ENCODE measurements at regions of chr19 and their contacts with region 1.

Region 1: DNA sequence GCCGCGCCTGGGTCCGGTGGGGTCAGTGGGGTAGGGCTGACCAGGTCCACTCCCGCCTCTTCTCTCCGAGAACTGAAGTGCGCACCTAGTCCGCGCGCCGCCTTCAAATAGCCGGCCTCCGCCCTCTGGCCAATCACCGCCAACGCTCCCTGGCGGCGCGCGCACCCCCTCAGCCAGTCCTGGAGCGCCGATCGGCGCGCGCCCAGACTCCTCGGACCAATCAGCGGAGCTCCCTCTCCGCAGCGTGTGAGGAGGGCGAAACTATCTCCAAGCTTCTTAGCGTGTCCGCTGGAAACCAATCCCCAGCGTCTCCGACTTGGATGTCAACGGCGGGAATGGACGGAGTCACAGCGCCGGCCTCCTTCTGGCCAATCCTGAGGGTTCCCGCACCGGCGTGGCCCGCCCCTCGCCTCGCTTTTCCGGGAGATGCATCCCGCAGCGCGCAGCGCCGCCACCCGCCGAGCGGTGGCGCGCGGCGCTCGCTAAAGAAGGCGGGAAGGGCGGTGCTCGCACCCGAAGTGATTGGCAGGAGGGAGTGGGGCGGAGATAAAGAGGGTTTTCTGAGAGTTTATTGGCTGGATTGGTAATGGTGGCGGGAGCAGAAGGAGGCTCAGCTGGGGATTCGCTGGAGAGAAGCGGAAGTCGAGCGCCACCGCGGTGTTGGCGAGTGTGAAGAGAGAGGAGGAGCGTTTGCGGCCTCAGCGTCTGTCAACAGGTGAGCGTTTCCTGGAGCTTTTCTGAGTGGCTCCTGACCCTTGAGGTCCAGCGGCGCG is at the start of gene ASF1B:
- DNase-seq: peak; percentile 94 to 99 (median 99)
- ATAC-seq: peak; percentile 88
- H3K4me3 ChIP-seq: peak within 1 kb of the TSS; percentile 87
- H3K4me3 Mint-ChIP-seq: peak within 1 kb of the TSS; percentile 84 to 97 (median 88)
- H3K27ac ChIP-seq: peak within 1 kb of the TSS; percentile 90
- H3K27ac Mint-ChIP-seq: peak within 1 kb of the TSS; percentile 88 to 97 (median 93)
- H3K4me1 ChIP-seq: peaks cover 8 to 15% of the 10 kb centered on the region in 2 donors
- H3K4me1 Mint-ChIP-seq: peaks cover 0 to 43% (median 34%) of the 10 kb centered on the region in 7 donors
- H3K27me3 ChIP-seq: no peaks in the 10 kb centered on the region
- H3K27me3 Mint-ChIP-seq: no peaks in the 10 kb centered on the region
- total RNA-seq, gene ASF1B: 0.98 to 79.0 (median 2.1) TPM

Region 2: DNA sequence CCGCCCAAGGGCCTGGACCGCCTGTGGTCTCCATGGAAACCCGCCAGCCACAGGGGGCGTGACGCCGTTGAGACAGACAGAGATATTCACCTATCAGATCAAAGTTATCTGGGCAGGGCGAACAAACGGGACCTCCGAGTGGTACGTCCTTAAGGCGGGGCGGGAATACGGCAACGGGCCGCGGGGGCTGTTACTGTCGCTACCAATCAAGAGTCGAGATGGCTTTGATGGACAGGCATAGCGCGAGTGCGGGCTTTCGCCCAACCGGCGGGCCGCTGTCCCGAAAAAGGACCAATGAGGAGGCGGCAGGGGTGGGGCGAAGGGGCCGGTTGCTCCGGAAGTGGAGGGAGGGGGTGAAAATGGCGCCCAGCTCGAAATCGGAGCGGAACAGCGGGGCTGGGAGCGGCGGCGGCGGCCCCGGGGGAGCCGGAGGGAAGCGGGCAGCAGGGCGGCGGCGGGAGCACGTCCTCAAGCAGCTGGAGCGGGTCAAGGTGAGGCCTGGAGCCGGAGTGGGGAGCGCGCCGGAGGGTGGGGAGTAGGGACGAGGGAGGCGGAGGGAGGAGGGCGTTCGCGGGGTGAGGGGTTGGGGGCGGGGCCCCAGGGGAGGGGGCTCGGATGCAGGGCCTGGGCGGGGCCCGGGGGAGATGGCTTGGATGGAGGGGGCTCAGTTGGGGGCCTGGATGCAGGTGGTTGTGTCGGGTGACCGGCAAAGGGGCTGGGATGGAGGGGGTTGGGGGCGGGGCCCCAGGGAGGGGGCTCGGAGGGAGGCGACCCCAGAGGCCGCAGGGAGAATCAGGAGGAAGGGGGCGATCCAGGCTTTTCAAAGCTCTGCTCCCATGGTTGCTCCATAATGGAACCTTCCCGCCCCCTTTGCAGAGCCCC is 184.3 kb before region 1 on chr19 and contains the start of gene DCAF15:
- CTCF ChIA-PET with region 1: no interaction called
- POLR2A ChIA-PET with region 1: no interaction called
- intact Hi-C with region 1: loop called in 1 of 2 experiments (anchors 1 kb)
- DNase-seq: peak; percentile 89 to 99 (median 99)
- ATAC-seq: peak; percentile 98
- H3K4me3 ChIP-seq: peak within 1 kb of the TSS; percentile 75
- H3K4me3 Mint-ChIP-seq: peak within 1 kb of the TSS; percentile 74 to 99 (median 93)
- H3K27ac ChIP-seq: peak within 1 kb of the TSS; percentile 90
- H3K27ac Mint-ChIP-seq: peak within 1 kb of the TSS; percentile 86 to 99 (median 91)
- H3K4me1 ChIP-seq: peaks cover 13 to 17% of the 10 kb centered on the region in 2 donors
- H3K4me1 Mint-ChIP-seq: peaks cover 5 to 24% (median 19%) of the 10 kb centered on the region in 7 donors
- H3K27me3 ChIP-seq: no peaks in the 10 kb centered on the region
- H3K27me3 Mint-ChIP-seq: no peaks in the 10 kb centered on the region
- total RNA-seq, gene DCAF15: 68.5 to 92.0 (median 87.2) TPM

Region 3: GRCh38 chr19:14091081-14091812 is 45.4 kb before region 1 on chr19:
- CTCF ChIA-PET with region 1: interaction called, 7 read pairs
- POLR2A ChIA-PET with region 1: interaction called, 9 read pairs
- intact Hi-C with region 1: loop called (anchors 1 kb)
- DNase-seq: peak; percentile 56 to 89 (median 84)
- ATAC-seq: peak; percentile 71
- H3K4me3 ChIP-seq: peak overlapping the region; percentile 99
- H3K4me3 Mint-ChIP-seq: peak overlapping the region; percentile 81 to 100 (median 98)
- H3K27ac ChIP-seq: peak overlapping the region; percentile 89
- H3K27ac Mint-ChIP-seq: peak overlapping the region; percentile 89 to 100 (median 98)
- H3K4me1 ChIP-seq: peaks cover 8 to 10% of the 10 kb centered on the region in 2 donors
- H3K4me1 Mint-ChIP-seq: peaks cover 13 to 21% (median 18%) of the 10 kb centered on the region in 7 donors
- H3K27me3 ChIP-seq: no peaks in the 10 kb centered on the region
- H3K27me3 Mint-ChIP-seq: no peaks in the 10 kb centered on the region

Region 4: DNA sequence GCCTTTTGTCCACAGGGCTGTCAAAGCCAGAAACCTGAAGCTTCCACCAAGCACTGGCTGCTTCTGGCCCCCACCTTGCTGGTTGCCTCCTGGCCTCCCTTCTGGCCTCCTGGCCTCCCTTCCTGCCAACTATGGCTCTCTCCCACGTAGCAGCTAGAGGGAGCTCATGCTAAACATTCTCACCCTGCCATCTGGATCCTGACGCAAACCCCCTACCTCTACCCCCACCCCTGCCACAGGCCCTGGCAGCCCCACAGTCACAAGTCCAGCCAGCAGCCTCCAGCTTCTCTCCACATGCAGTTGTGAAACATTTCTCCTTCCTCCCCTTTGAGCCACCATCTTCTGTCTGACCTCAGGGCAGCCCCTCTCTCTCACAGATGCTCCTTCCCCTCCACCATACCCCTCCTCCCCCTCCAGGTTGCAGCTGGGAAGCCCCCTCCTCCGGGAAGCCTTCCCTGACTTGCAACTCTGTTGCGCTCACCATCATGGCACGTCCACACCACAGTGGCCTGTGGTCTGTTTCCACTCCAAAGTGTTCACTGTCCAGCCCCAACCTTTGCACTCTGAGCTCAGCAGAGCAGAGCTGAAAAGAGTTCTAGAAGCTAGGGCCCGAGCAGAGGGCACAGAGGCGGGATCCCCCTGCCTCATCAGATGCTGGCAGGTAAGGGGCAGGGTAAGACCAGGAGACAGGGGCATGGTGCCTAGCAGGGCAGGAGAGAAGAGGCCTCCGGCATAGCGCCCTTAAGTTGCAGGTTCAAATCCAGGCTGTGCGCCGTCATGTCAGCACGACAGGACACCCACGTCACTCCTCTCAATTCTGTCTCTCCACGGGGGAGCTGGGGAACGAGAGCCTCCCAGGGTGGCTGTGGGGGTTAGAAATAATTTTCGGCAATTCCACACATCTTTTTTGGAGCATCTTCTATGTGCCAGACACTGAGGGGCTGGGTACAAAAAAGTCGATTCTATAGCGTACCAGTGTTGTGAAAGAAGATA is 62.0 kb after region 1 on chr19:
- CTCF ChIA-PET with region 1: interaction called, 4 read pairs
- POLR2A ChIA-PET with region 1: interaction called, 7 read pairs
- intact Hi-C with region 1: loop called in 1 of 2 experiments (anchors 1 kb)
- DNase-seq: no peak
- ATAC-seq: no peak
- H3K4me3 ChIP-seq: no peak overlapping the region
- H3K4me3 Mint-ChIP-seq: no peak overlapping the region
- H3K27ac ChIP-seq: no peak overlapping the region
- H3K27ac Mint-ChIP-seq: no peak overlapping the region
- H3K4me1 ChIP-seq: peaks cover 0 to 4% of the 10 kb centered on the region in 2 donors
- H3K4me1 Mint-ChIP-seq: peaks cover 19 to 45% (median 34%) of the 10 kb centered on the region in 7 donors
- H3K27me3 ChIP-seq: no peaks in the 10 kb centered on the region
- H3K27me3 Mint-ChIP-seq: peaks cover 0 to 11% (median 0%) of the 10 kb centered on the region in 5 donors

Region 5: GRCh38 chr19:14419106-14419813 is 282.6 kb after region 1 on chr19 and contains the start of gene DDX39A:
- CTCF ChIA-PET with region 1: no interaction called
- POLR2A ChIA-PET with region 1: interaction called, 8 read pairs
- intact Hi-C with region 1: loop called (anchors 1 to 2 kb)
- DNase-seq: peak; percentile 80 to 99 (median 98)
- ATAC-seq: peak; percentile 90
- H3K4me3 ChIP-seq: peak within 1 kb of the TSS; percentile 87
- H3K4me3 Mint-ChIP-seq: peak within 1 kb of the TSS; percentile 83 to 97 (median 92)
- H3K27ac ChIP-seq: peak within 1 kb of the TSS; percentile 92
- H3K27ac Mint-ChIP-seq: peak within 1 kb of the TSS; percentile 90 to 97 (median 95)
- H3K4me1 ChIP-seq: peaks cover 24 to 29% of the 10 kb centered on the region in 2 donors
- H3K4me1 Mint-ChIP-seq: peaks cover 23 to 49% (median 38%) of the 10 kb centered on the region in 7 donors
- H3K27me3 ChIP-seq: no peaks in the 10 kb centered on the region
- H3K27me3 Mint-ChIP-seq: peaks cover 0 to 2% (median 0%) of the 10 kb centered on the region in 5 donors
- total RNA-seq, gene DDX39A: 135 to 288 (median 215) TPM

Region 6: GRCh38 chr19:14556662-14557188 is 420.0 kb after region 1 on chr19:
- CTCF ChIA-PET with region 1: no interaction called
- POLR2A ChIA-PET with region 1: no interaction called
- intact Hi-C with region 1: loop called in 1 of 2 experiments (anchors 10 kb)
- DNase-seq: peak; percentile 42 to 75 (median 60)
- ATAC-seq: peak; percentile 91
- H3K4me3 ChIP-seq: peak overlapping the region; percentile 10
- H3K4me3 Mint-ChIP-seq: peak overlapping the region; percentile 29 to 79 (median 68)
- H3K27ac ChIP-seq: no peak overlapping the region
- H3K27ac Mint-ChIP-seq: peak overlapping the region in 8 of 9 donors; percentile 79 to 90 (median 84)
- H3K4me1 ChIP-seq: peaks cover 15 to 53% of the 10 kb centered on the region in 2 donors
- H3K4me1 Mint-ChIP-seq: peaks cover 28 to 71% (median 40%) of the 10 kb centered on the region in 7 donors
- H3K27me3 ChIP-seq: no peaks in the 10 kb centered on the region
- H3K27me3 Mint-ChIP-seq: no peaks in the 10 kb centered on the region

Measured in naive thymus-derived CD4-positive, alpha-beta T cell (primary cell).